ENCODE measurements at regions of chr7 and their contacts with region 1.

Region 1: DNA sequence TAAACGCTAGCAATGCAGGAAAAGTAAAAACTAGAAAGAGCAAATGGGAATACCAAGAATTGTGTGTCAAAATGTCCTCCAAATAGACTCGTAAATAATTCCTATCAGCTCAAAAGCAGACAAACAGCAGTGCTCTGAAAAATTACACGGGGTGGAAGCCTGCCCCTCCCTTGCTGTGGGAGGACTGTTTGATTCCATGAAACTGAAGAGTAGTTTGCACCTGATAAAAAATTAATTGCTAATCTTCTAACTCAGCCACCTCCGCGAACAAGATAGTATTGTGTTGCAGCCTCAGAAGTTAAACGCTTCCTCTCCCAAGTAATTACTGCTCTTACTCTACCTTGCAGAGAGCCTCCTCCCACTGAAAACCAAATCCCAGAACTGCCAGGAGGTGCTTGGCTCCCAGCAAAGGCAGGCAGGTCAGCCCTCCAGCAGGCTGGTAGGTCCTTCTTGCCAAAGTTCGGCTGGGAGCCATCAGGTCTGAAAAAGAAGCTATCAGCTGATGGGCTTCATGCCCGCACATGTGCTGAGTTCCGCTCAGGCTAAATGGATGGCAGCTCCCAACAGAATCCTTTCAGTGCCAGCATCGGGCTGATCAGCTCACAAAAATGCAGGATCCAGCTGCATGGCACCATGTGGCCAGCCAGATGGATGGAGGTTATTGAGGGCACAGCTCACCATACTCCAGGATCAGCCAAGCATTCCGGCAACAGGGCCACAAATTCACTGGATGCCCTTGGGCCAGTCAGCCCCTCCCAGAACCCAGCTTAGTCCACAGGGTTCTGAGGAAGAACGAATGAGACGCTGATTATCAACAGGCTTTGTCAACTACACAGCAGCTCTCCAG is 37.1 kb downstream of the MAD1L1 start:
- DNase-seq: no peak
- ATAC-seq: no peak
- H3K4me3 ChIP-seq: no peak overlapping the region
- H3K4me3 Mint-ChIP-seq: no peak overlapping the region
- H3K27ac ChIP-seq: no peak overlapping the region
- H3K27ac Mint-ChIP-seq: no peak overlapping the region
- H3K4me1 ChIP-seq: no peaks in the 10 kb centered on the region
- H3K4me1 Mint-ChIP-seq: peaks cover 2% of the 10 kb centered on the region
- H3K27me3 ChIP-seq: no peaks in the 10 kb centered on the region
- H3K27me3 Mint-ChIP-seq: no peaks in the 10 kb centered on the region
- CTCF ChIP-seq: no peak

Region 2: GRCh38 chr7:2270061-2270460 is 74.4 kb after region 1 on chr7:
- CTCF ChIA-PET with region 1: no interaction called
- POLR2A ChIA-PET with region 1: no interaction called
- intact Hi-C with region 1: loop called in 1 of 2 experiments (anchors 5 kb)
- DNase-seq: no peak
- ATAC-seq: no peak
- H3K4me3 ChIP-seq: no peak overlapping the region
- H3K4me3 Mint-ChIP-seq: no peak overlapping the region
- H3K27ac ChIP-seq: no peak overlapping the region
- H3K27ac Mint-ChIP-seq: no peak overlapping the region
- H3K4me1 ChIP-seq: no peaks in the 10 kb centered on the region
- H3K4me1 Mint-ChIP-seq: no peaks in the 10 kb centered on the region
- H3K27me3 ChIP-seq: no peaks in the 10 kb centered on the region
- H3K27me3 Mint-ChIP-seq: no peaks in the 10 kb centered on the region
- CTCF ChIP-seq: no peak

Measured in CD8-positive, alpha-beta T cell (primary cell).